Esophagus squamous epithelium (tissue), 5 donors: ENCODE measurements at regions of chr3 and their contacts with region 1.

Region 1: GRCh38 chr3:129490242-129491045 is 38.0 kb upstream of the RHO start:
- DNase-seq: no peak
- H3K4me3 ChIP-seq: no peak overlapping the region
- H3K27ac ChIP-seq: peak overlapping the region; percentile 55 to 82 (median 76)
- H3K4me1 ChIP-seq: peaks cover 6 to 42% (median 24%) of the 10 kb centered on the region in 3 donors
- H3K27me3 ChIP-seq: no peaks in the 10 kb centered on the region
- CTCF ChIP-seq: peak; percentile 78 to 87 (median 85)
- POLR2A ChIP-seq: peak in 1 of 4 donors; percentile 35

Region 2: GRCh38 chr3:129606636-129607390 is 116.4 kb after region 1 on chr3 and contains the start of gene PLXND1:
- intact Hi-C with region 1: loop called (anchors 10 kb)
- DNase-seq: peak; percentile 6
- H3K4me3 ChIP-seq: peak within 1 kb of the TSS; percentile 51 to 66 (median 60)
- H3K27ac ChIP-seq: peak within 1 kb of the TSS; percentile 84 to 94 (median 90)
- H3K4me1 ChIP-seq: peaks cover 29 to 92% (median 44%) of the 10 kb centered on the region in 3 donors
- H3K27me3 ChIP-seq: peaks cover 0 to 45% (median 4%) of the 10 kb centered on the region in 4 donors
- CTCF ChIP-seq: no peak
- POLR2A ChIP-seq: peak in 2 of 4 donors; percentile 42 to 65
- total RNA-seq, gene PLXND1: 4.5 to 66.0 (median 24.4) TPM